OCI-LY7 (cell line): ENCODE measurements at regions of chr10 and their contacts with region 1.

Region 1: GRCh38 chr10:70293169-70293813 is 9.5 kb upstream of the NPFFR1 start:
- DNase-seq: peak; percentile 92
- H3K4me3 ChIP-seq: peak overlapping the region; percentile 22
- H3K27ac ChIP-seq: peak overlapping the region; percentile 86
- H3K4me1 ChIP-seq: peaks cover 53% of the 10 kb centered on the region
- CTCF ChIP-seq: no peak

Region 2: GRCh38 chr10:70306181-70306705 is 13.0 kb after region 1 on chr10:
- CTCF ChIA-PET with region 1: no interaction called
- POLR2A ChIA-PET with region 1: interaction called, 5 read pairs
- intact Hi-C with region 1: loop called (anchors 1 kb)
- DNase-seq: peak; percentile 83
- H3K4me3 ChIP-seq: peak overlapping the region; percentile 19
- H3K27ac ChIP-seq: peak overlapping the region; percentile 85
- H3K4me1 ChIP-seq: peaks cover 40% of the 10 kb centered on the region
- CTCF ChIP-seq: no peak

Region 3: DNA sequence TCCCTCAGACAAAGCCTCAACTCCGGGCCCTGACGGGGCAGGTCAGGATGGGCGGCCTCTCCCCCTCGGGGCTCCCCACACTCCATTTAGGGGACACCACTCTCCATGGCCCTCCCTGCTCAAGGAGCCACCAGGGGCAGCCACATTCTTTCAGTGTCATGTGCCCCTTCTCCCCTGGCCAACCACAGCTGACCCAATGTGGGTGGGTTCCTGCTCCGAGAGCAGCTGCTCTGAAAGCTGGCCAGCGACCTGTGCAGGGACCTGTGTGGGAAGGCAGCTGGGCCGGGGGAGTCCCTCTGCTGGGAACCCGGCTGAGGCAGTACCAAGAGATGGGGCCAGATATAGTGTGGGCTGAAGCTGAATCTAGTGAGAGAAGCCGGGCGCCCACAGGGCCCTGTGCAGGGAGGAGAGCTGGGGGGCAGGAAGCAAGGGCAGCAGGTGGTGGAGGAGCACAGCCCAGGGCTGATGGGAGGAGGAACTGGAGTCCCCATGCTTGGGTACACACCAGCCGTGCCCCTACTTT is 31.1 kb after region 1 on chr10:
- CTCF ChIA-PET with region 1: no interaction called
- POLR2A ChIA-PET with region 1: no interaction called
- intact Hi-C with region 1: loop called (anchors 2 kb)
- DNase-seq: peak; percentile 81
- H3K4me3 ChIP-seq: peak overlapping the region; percentile 24
- H3K27ac ChIP-seq: peak overlapping the region; percentile 75
- H3K4me1 ChIP-seq: peaks cover 78% of the 10 kb centered on the region
- CTCF ChIP-seq: no peak

Region 4: DNA sequence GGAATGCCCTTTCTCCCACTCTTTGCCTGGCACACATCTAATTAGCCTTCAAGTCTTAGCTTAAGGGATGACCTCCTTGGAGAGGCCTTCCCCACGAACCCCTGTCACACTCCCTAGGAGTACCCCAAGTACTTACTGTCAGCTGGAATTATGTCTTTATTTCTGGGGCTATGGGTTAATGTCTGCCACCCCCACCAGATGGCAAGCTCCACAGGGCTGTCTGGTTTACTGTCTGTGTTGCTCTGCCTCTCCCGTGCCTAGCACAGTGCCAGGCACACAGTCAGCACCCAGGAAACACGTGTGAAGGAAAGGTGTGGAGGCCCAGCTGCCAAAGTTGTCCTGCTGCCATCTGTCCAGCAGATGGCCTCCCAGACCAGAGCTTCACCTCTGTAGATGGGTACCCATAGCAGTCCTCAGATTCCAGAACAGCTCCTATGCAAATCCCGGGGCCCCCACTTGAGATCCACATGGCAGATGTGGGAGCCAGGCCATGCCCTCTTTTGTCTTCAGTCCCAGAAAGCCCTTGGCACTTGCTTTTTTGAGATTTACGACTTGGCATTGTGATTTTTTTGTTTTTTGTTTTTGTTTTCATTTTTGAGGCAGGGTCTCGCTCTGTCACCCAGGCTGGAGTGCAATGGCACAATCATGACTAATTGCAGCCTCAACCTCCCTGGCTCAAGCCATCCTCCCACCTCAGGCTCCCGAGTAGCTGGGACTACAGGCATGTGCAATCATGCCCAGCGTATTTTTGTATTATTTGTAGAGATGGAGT is 168.1 kb after region 1 on chr10:
- CTCF ChIA-PET with region 1: no interaction called
- POLR2A ChIA-PET with region 1: no interaction called
- intact Hi-C with region 1: no loop called
- DNase-seq: peak; percentile 74
- H3K4me3 ChIP-seq: no peak overlapping the region
- H3K27ac ChIP-seq: no peak overlapping the region
- H3K4me1 ChIP-seq: no peaks in the 10 kb centered on the region
- CTCF ChIP-seq: peak; percentile 92

Region 5: DNA sequence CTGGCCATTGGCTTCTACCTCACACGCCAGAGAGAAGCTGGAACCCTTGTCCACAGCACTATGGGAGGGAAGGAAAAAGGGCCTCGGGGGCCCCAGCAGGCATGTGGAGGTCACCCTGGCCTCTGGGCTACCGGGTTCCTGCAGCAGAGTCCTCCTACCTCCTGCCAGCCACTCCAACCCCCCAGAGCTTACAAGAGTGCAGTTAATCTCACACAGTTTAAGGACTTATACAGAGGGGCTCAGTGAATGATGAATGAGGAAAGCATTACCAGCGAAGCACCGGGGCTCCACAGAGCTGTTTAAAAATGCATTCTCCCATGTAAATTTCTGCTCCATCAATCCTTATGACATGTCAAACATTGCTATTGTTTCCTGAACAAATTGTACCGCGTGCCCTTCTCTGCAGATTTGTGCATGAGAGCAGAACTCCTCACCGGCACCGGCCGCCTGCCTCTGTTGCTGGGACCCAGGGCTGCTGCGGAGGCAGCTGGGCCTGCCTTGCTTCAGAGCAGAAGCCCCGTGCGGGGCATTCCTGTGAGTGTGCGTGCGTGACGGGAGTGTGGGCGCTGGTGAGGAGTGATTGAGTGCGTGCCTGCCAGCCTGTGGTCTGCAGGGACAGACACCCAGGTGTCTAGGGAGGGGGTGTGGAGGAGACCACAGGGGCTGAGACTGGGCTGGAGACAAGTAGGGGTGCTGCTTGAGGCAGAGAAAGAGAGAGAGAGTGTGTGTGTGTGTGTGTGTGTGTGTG is 1373.5 kb after region 1 on chr10:
- CTCF ChIA-PET with region 1: no interaction called
- POLR2A ChIA-PET with region 1: no interaction called
- intact Hi-C with region 1: no loop called
- DNase-seq: no peak
- H3K4me3 ChIP-seq: no peak overlapping the region
- H3K27ac ChIP-seq: peak overlapping the region; percentile 36
- H3K4me1 ChIP-seq: peaks cover 29% of the 10 kb centered on the region
- CTCF ChIP-seq: no peak